Lower leg skin (tissue), 4 donors: ENCODE measurements at regions of chr20 and their contacts with region 1.

Region 1: DNA sequence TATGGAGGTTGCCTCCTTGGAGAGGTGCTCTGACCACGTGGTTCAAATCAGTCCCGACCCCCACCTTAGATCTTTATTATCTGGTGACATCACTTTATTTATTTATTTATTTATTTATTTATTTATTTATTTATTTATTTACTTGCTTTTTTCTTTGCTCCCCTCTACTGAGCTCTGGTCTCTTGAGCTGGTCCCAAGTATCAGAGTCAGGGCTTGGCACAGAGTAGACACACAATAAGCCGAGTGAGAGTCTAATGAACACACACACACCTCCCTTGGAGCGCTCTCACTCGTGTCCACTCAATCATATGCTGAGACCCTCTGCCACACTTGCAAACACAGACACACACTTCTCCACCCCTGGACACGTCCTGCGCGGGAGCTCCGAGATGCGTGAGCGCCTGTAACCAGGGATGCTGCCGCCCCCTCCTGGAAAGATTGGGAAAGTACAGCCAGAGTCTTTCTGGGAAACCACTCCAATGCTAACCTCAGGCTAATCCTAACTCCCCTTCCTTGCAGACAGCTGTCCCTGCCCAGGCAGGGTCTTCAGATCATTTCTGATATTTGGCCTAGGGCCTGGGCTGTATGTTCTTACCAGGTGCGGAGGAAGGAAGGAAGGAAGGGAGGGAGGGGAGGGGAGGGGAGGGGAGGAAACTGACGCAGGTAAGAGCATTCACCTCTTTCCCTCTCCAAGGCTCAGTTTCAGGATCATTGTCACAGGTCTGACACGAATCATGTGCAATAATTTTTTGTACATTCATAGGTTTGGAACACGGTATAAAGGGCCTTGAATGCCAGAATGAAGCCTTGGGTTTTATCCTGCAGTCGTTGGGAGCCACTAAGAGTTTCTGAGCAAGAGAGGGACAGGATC is 70.9 kb downstream of the STK35 start:
- DNase-seq: peak; percentile 51 to 94
- H3K4me3 ChIP-seq: no peak overlapping the region
- CTCF ChIP-seq: peak in 1 of 3 donors; percentile 63
- POLR2A ChIP-seq: no peak

Region 2: DNA sequence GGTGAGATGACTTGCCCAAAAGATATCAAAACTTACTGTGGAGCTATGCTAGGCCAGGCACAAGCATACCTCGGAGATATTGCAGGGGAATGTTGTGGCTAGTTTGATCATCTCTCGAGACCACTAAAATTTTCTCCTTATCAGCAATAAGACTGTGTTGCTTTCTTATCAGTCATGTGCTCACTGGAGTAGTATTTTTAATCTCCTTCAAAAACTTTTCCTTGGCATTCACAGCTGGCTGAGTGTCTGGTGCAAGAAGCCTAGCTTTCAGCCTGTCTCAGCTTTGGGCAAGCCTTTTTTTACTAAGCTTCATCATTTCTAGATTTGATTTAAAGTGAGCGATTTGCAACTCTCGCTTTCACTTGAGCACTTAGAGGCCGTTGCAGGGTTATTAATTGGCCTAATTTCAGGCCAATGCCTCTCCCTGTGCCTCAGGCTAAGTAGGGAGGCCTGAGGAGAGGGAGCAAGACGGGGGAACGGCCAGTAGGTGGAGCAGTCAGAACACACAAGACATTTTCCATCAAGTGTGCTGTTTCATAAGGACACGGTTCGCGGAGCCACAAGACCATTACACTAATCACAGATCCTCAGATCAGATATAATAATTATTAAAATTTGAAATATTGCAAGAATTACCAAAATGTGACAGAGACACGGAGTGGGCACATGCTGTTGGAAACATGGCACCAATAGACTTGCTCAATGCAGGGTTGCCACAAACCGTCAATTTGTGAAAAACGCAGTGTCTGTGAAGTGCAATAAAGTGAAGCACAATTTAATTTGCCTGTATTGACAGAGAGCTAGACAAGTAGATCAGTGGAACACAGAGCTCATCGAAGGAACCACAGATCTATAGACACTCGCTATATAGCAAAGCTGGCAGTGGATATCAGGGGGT is 408.2 kb before region 1 on chr20:
- intact Hi-C with region 1: loop called (anchors 10 kb)
- DNase-seq: peak; percentile 52 to 93
- H3K4me3 ChIP-seq: no peak overlapping the region
- CTCF ChIP-seq: no peak
- POLR2A ChIP-seq: no peak

Region 3: GRCh38 chr20:1965520-1966351 is 206.8 kb before region 1 on chr20:
- intact Hi-C with region 1: loop called (anchors 2 kb)
- DNase-seq: peak; percentile 58 to 95
- H3K4me3 ChIP-seq: no peak overlapping the region
- CTCF ChIP-seq: peak in 1 of 3 donors; percentile 91
- POLR2A ChIP-seq: no peak